GM12878 (cell line): ENCODE measurements at regions of chr9 and their contacts with region 1.

Region 1: GRCh38 chr9:127586537-127586936 is 25.5 kb upstream of the STXBP1 start:
- DNase-seq: no peak
- ATAC-seq: peak; percentile 91
- H3K4me3 ChIP-seq: no peak overlapping the region
- H3K27ac ChIP-seq: no peak overlapping the region
- H3K4me1 ChIP-seq: no peaks in the 10 kb centered on the region; the same call in 1 of the 2 replicates
- H3K27me3 ChIP-seq: no peaks in the 10 kb centered on the region
- CTCF ChIP-seq: peak; percentile 77 to 91 (median 85)
- EP300 ChIP-seq: no peak
- POLR2A ChIP-seq: no peak
- RAD21 ChIP-seq: peak; percentile 86

Region 2: GRCh38 chr9:127493592-127494301 is 92.8 kb before region 1 on chr9:
- CTCF ChIA-PET with region 1: no interaction called
- POLR2A ChIA-PET with region 1: no interaction called
- RAD21 ChIA-PET with region 1: no interaction called
- SMC1A ChIA-PET with region 1: no interaction called
- in situ Hi-C with region 1: no loop called
- intact Hi-C with region 1: no loop called
- DNase-seq: no peak
- ATAC-seq: no peak
- H3K4me3 ChIP-seq: no peak overlapping the region
- H3K27ac ChIP-seq: no peak overlapping the region
- H3K4me1 ChIP-seq: no peaks in the 10 kb centered on the region
- H3K27me3 ChIP-seq: no peaks in the 10 kb centered on the region
- CTCF ChIP-seq: no peak
- EP300 ChIP-seq: no peak
- POLR2A ChIP-seq: no peak
- RAD21 ChIP-seq: no peak

Region 3: DNA sequence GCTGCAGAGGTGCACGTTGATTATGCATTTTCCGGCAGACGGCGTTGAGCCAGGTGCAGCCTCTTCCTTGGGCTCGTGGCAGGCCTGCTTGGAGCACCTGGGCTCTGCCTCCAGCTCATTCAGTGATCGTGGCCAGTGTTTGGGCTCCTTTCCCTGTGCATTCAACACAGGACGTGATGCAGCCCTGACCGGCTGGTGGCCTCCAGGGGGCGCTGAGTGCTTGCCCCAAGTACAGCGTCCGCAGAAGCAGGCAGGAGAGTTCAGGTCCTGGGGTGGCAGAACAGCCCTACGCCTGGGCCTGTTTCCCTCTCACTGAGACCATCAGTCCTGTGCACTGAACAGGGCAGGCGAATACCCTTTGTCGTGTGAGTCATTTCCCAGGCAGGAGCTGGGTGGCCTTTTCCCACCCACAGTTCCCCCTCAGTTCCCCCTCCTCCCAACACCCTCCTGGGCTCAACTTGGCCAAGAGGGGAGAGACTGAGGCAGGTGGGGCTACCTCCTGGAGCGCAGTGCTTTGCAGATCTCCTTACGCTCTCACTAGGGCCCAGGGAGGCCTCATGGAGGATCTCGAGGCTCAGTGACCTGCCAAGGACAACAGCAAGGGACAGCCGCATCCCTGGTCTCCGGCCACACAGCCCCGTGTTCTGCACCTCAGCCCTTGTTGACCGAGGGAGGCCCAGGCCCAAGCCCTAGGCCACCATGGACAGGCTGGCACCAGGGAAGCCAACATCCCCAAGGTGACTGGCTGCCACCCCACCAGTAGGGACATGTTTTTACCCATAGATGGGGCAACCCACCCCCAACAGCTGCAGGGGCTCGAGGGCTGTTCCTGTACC is 82.4 kb before region 1 on chr9:
- CTCF ChIA-PET with region 1: interaction called, 31 read pairs
- POLR2A ChIA-PET with region 1: no interaction called
- RAD21 ChIA-PET with region 1: interaction called, 18 read pairs
- SMC1A ChIA-PET with region 1: interaction called, 6 read pairs
- in situ Hi-C with region 1: loop called (anchors 5 kb)
- intact Hi-C with region 1: loop called (anchors 1 kb)
- DNase-seq: no peak
- ATAC-seq: peak; percentile 89
- H3K4me3 ChIP-seq: no peak overlapping the region
- H3K27ac ChIP-seq: no peak overlapping the region
- H3K4me1 ChIP-seq: no peaks in the 10 kb centered on the region
- H3K27me3 ChIP-seq: no peaks in the 10 kb centered on the region
- CTCF ChIP-seq: peak; percentile 84 to 94 (median 93)
- EP300 ChIP-seq: no peak
- POLR2A ChIP-seq: no peak
- RAD21 ChIP-seq: peak; percentile 82

Region 4: DNA sequence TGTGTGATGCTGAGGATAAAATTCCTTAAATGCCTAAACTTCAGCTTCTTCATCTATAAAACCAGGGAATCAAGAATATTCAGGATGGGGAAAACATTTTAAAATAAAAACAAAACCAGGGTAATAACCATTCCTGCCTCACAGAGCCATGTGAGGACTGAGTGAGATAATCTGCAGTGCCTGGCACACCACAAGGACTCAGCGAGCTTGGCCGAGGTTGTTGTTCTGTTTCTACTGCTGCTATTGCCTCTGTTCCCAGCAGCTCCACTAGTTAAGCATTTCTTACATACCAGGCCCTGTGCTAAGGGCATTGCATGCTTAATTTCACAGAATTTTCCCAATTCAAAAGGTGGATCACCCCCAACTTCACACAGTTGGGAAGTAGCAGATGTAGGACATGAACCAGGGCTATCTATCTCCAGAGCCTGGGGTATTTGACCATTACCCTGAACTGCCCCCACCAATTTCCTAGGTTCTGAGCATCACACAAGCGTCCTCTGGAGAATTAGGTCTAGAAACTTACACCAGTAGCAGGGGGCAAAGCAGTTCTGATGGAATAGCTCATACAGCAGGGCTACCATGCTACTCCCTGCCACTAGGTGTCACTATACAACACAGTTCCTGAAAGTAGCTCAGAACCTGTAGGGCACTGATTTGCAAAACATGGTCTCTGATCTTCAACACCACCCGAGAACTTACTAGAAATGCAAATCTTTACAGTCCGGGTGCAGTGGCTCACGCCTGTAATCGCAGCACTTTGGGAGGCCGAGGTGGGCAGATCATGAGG is 60.9 kb before region 1 on chr9:
- CTCF ChIA-PET with region 1: interaction called, 33 read pairs
- POLR2A ChIA-PET with region 1: no interaction called
- RAD21 ChIA-PET with region 1: interaction called, 3 read pairs
- SMC1A ChIA-PET with region 1: interaction called, 13 read pairs
- in situ Hi-C with region 1: no loop called
- intact Hi-C with region 1: no loop called
- DNase-seq: no peak
- ATAC-seq: peak; percentile 58; the same call in 2 of the 3 replicates
- H3K4me3 ChIP-seq: no peak overlapping the region
- H3K27ac ChIP-seq: no peak overlapping the region
- H3K4me1 ChIP-seq: no peaks in the 10 kb centered on the region
- H3K27me3 ChIP-seq: no peaks in the 10 kb centered on the region
- CTCF ChIP-seq: peak; percentile 26 to 50 (median 44); a peak in 4 of 6 replicates
- EP300 ChIP-seq: no peak
- POLR2A ChIP-seq: no peak
- RAD21 ChIP-seq: no peak

Region 5: GRCh38 chr9:127574072-127575017 is 12.2 kb before region 1 on chr9:
- CTCF ChIA-PET with region 1: interaction called, 5 read pairs
- POLR2A ChIA-PET with region 1: no interaction called
- RAD21 ChIA-PET with region 1: no interaction called
- SMC1A ChIA-PET with region 1: interaction called, 10 read pairs
- in situ Hi-C with region 1: no loop called
- intact Hi-C with region 1: no loop called
- DNase-seq: no peak
- ATAC-seq: no peak
- H3K4me3 ChIP-seq: no peak overlapping the region
- H3K27ac ChIP-seq: no peak overlapping the region
- H3K4me1 ChIP-seq: peaks cover 17% of the 10 kb centered on the region
- H3K27me3 ChIP-seq: no peaks in the 10 kb centered on the region; a peak in 1 of 4 replicates
- CTCF ChIP-seq: no peak; a peak in 1 of 6 replicates
- EP300 ChIP-seq: no peak
- POLR2A ChIP-seq: no peak
- RAD21 ChIP-seq: no peak